HEK293 (cell line): ENCODE measurements at regions of chr17 and their contacts with region 1.

Region 1: GRCh38 chr17:38943607-38944006 is 18.2 kb downstream of the LASP1NB start:
- H3K4me3 ChIP-seq: no peak overlapping the region
- H3K27ac ChIP-seq: no peak overlapping the region
- H3K4me1 ChIP-seq: no peaks in the 10 kb centered on the region
- CTCF ChIP-seq: no peak

Region 2: DNA sequence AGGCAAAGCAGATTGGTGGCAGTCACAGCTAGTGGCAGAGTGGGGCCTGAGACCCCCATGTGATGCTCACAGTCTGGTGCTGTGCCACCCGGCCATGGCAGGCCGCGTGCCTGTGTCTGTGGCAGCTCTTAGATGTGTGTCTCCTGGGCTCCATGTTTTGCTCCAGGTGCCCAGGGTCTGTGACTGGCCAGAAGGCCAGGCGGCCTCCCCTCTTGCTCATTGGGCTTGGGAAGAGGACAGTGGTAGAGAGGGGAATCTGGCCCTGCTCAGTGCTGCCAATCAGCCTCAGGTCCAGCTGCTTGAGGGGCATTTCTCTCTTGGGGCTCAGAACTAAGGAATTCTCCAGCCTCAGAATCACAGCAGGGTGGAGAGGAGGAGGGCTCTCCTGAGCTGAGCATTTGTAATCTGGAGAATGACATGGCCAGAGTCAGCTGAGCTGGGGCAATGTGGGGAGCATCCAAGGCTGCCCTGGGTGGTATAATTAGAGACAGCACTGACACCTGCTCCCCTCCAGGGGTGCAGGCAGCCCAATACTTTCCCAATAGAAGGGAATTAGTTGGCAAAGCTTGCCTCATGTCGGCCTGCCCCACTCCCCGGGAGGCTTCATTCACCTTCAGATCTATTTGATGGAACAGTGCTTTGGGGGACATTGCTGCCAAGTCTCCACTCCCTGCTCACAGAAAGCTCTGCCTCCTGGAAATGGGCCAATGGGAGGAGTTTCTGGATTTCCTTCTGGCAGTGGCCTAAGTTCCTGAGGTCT is 20.9 kb before region 1 on chr17:
- CTCF ChIA-PET with region 1: interaction called, 11 read pairs
- POLR2A ChIA-PET with region 1: no interaction called
- H3K4me3 ChIP-seq: no peak overlapping the region
- H3K27ac ChIP-seq: no peak overlapping the region
- H3K4me1 ChIP-seq: no peaks in the 10 kb centered on the region; the same call in 1 of the 2 replicates
- CTCF ChIP-seq: no peak

Region 3: DNA sequence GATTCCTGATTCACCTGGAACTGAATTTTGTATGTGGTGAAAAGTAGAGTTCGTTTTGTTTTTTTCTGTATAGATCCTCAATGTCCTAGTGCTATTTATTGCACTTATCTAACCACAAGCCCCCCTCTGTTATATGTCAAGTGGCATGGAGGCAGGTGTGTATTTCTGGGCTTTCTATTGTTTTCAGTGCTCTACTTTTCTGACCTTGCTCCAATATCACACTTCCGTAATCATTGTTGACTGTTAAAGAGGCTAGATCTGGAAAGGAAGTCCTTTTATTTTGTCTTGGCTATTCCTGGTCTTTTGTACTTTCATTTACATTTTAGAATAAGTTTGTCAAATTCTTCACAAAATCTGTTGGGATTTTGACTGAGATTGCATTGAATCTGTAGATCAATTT is 50.4 kb after region 1 on chr17:
- CTCF ChIA-PET with region 1: no interaction called
- POLR2A ChIA-PET with region 1: no interaction called
- H3K4me3 ChIP-seq: no peak overlapping the region
- H3K27ac ChIP-seq: no peak overlapping the region
- H3K4me1 ChIP-seq: no peaks in the 10 kb centered on the region
- CTCF ChIP-seq: no peak